PC-3 (cell line): ENCODE measurements at regions of chr5 and their contacts with region 1.

Region 1: GRCh38 chr5:161660806-161661205 is 24.7 kb upstream of the GABRA6 start:
- DNase-seq: no peak
- ATAC-seq: no peak
- H3K4me3 ChIP-seq: no peak overlapping the region
- H3K27ac ChIP-seq: no peak overlapping the region
- H3K4me1 ChIP-seq: no peaks in the 10 kb centered on the region
- H3K27me3 ChIP-seq: no peaks in the 10 kb centered on the region
- CTCF ChIP-seq: no peak

Region 2: DNA sequence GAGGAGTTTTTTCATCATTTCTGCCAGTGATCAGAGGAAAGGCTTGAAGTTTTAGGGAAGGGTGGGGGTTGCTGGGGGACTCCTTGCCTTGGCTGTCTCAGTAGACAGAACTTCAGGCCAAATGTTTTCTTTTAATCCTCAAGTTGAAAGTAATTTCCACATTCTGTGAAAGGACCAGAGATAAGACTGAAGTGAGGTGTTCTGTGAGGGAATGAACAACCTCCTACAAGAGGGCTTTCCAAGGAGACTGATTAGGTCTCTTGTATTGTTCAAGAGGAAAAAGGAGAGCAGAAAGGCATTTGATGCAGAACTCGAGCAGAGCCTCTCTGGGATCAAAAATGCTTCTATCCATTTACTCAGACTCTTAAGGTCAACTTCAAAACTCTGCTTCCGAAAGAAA is 526.7 kb before region 1 on chr5:
- CTCF ChIA-PET with region 1: no interaction called
- POLR2A ChIA-PET with region 1: no interaction called
- intact Hi-C with region 1: loop called (anchors 5 kb)
- DNase-seq: no peak
- ATAC-seq: no peak
- H3K4me3 ChIP-seq: no peak overlapping the region
- H3K27ac ChIP-seq: no peak overlapping the region
- H3K4me1 ChIP-seq: no peaks in the 10 kb centered on the region
- H3K27me3 ChIP-seq: no peaks in the 10 kb centered on the region
- CTCF ChIP-seq: no peak

Region 3: DNA sequence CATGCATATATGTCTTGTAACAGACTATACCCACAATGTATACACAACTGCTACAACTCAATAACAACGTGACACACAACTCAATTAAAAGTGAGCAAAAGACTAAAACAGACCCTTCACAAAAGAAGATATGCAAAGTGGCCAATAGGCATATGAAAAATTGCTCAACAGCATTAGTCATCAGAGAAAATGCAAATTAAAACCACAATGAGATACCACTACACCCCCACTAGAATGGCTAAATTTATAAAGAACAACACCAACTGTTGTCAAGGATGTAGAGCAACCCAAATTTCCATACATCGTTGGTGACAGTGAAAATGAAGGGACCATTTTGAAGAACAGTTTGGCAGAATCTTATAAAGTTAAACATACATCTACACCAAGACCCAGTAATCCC is 153.2 kb before region 1 on chr5:
- CTCF ChIA-PET with region 1: no interaction called
- POLR2A ChIA-PET with region 1: no interaction called
- intact Hi-C with region 1: no loop called
- DNase-seq: no peak
- ATAC-seq: no peak
- H3K4me3 ChIP-seq: no peak overlapping the region
- H3K27ac ChIP-seq: no peak overlapping the region
- H3K4me1 ChIP-seq: no peaks in the 10 kb centered on the region
- H3K27me3 ChIP-seq: no peaks in the 10 kb centered on the region
- CTCF ChIP-seq: no peak